AG04450 (cell line): ENCODE measurements at regions of chr16 and their contacts with region 1.

Region 1: GRCh38 chr16:65121870-65122723 is at the start of gene CDH11:
- DNase-seq: peak; percentile 55
- H3K4me3 ChIP-seq: peak within 1 kb of the TSS; percentile 93
- H3K27ac ChIP-seq: peak within 1 kb of the TSS; percentile 93
- H3K27me3 ChIP-seq: no peaks in the 10 kb centered on the region
- CTCF ChIP-seq: peak; percentile 44
- polyA plus RNA-seq, gene CDH11: 276 and 306 TPM in 2 replicates

Region 2: DNA sequence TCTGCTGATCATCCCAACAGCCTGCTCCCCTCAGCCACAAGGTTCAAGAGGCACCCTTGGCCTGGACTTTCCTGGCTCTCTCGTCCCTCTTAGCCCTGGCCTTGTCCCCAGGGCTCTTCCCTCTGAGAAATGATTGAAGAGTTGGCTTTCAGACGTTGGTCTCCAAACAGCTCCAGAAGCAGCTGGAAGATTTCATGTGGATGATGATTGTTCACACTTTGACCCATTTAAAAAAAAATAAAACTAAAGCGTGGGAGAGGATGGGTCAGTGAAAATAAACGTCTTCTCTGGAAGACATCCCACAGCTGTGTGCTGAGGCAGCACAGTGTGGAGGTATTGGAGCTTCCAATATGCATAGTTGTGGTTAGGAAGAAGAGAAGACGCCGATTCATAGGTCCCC is 54.5 kb after region 1 on chr16:
- CTCF ChIA-PET with region 1: no interaction called
- POLR2A ChIA-PET with region 1: interaction called, 12 read pairs
- DNase-seq: peak; percentile 79
- H3K4me3 ChIP-seq: no peak overlapping the region
- H3K27ac ChIP-seq: no peak overlapping the region
- H3K27me3 ChIP-seq: no peaks in the 10 kb centered on the region
- CTCF ChIP-seq: no peak